Naive thymus-derived CD4-positive, alpha-beta T cell (primary cell): ENCODE measurements at regions of chr21 and their contacts with region 1.

Region 1: GRCh38 chr21:35840197-35840799 is 220.0 kb downstream of the SETD4 start:
- DNase-seq: peak in 7 of 9 donors; percentile 30 to 69 (median 52)
- ATAC-seq: peak; percentile 69
- H3K4me3 ChIP-seq: no peak overlapping the region
- H3K4me3 Mint-ChIP-seq: no peak overlapping the region
- H3K27ac ChIP-seq: no peak overlapping the region
- H3K27ac Mint-ChIP-seq: no peak overlapping the region
- H3K4me1 ChIP-seq: peaks cover 0 to 4% of the 10 kb centered on the region in 2 donors
- H3K4me1 Mint-ChIP-seq: peaks cover 0 to 18% (median 5%) of the 10 kb centered on the region in 7 donors
- H3K27me3 ChIP-seq: no peaks in the 10 kb centered on the region
- H3K27me3 Mint-ChIP-seq: peaks cover 0 to 6% (median 0%) of the 10 kb centered on the region in 5 donors

Region 2: DNA sequence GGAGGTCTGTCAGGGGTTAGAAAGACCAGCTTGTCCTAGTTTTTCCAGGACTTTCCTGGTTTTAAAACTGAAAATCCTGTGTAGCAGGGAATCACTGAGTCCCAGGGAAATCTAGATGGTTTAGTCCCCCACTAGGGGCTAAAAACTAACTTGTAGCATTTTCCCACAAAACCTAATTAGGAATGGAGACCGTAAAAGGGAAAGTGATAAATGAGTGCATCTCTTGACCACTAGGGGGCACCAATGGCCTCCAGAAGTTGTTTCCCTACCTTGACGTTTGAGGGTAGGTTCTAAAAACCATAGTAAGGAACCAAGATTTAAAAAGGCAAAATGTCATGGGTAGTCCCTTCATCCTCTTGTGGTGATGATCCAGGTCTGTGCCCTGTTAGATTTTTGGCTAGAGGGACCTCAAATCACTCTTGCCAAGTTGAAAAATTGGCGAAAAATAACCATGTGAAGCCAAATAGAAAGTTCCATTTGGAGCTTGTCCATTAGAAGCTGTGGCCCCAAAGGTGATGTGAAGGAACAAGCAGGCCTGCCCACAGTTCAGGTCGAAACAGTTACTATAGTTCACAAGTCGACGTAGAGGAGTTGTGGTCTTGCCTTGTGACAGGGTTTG is 1147.0 kb before region 1 on chr21:
- CTCF ChIA-PET with region 1: interaction called, 36 read pairs
- POLR2A ChIA-PET with region 1: no interaction called
- intact Hi-C with region 1: loop called (anchors 1 kb)
- DNase-seq: peak in 7 of 9 donors; percentile 33 to 63 (median 58)
- ATAC-seq: peak; percentile 72
- H3K4me3 ChIP-seq: no peak overlapping the region
- H3K4me3 Mint-ChIP-seq: no peak overlapping the region
- H3K27ac ChIP-seq: no peak overlapping the region
- H3K27ac Mint-ChIP-seq: no peak overlapping the region
- H3K4me1 ChIP-seq: no peaks in the 10 kb centered on the region
- H3K4me1 Mint-ChIP-seq: peaks cover 0 to 10% (median 3%) of the 10 kb centered on the region in 7 donors
- H3K27me3 ChIP-seq: peaks cover 0 to 4% of the 10 kb centered on the region in 2 donors
- H3K27me3 Mint-ChIP-seq: peaks cover 2 to 43% (median 10%) of the 10 kb centered on the region in 5 donors

Region 3: DNA sequence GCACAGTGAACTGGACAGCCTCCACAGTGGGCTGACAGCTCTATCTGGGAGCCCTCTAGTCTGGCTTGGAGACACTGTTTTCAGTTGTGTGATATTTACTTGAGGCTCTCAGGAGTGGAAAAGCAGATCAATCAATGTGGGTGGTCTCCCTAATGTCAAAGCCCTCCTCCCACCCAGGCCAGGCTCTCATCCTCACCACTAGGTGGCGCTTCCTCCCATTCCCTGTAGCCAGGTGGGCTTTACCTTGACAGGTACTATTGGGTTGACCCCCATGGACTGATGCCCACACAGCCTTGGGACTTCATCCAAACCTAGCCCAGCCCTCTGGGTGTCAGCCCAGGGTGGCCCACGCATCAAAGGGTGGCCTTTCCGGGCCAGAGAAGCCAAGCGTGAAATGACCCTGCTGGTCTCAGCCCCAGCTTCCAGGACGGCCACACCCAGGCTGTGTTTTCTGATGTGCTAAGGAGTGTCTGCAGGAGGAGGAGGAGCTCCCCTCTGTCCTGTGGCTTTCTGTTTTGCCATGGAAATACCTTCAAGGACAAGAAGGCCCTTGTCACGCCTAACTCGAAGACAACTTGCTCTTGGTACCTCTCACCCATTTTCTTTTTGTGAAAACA is 1117.5 kb before region 1 on chr21:
- CTCF ChIA-PET with region 1: interaction called, 4 read pairs
- POLR2A ChIA-PET with region 1: no interaction called
- intact Hi-C with region 1: loop called (anchors 1 kb)
- DNase-seq: peak in 4 of 9 donors; percentile 8 to 38 (median 22)
- ATAC-seq: no peak
- H3K4me3 ChIP-seq: no peak overlapping the region
- H3K4me3 Mint-ChIP-seq: no peak overlapping the region
- H3K27ac ChIP-seq: no peak overlapping the region
- H3K27ac Mint-ChIP-seq: no peak overlapping the region
- H3K4me1 ChIP-seq: no peaks in the 10 kb centered on the region
- H3K4me1 Mint-ChIP-seq: peaks cover 0 to 9% (median 0%) of the 10 kb centered on the region in 7 donors
- H3K27me3 ChIP-seq: no peaks in the 10 kb centered on the region
- H3K27me3 Mint-ChIP-seq: peaks cover 4 to 16% (median 10%) of the 10 kb centered on the region in 5 donors

Region 4: GRCh38 chr21:34801519-34802132 is 1038.7 kb before region 1 on chr21:
- CTCF ChIA-PET with region 1: no interaction called
- POLR2A ChIA-PET with region 1: no interaction called
- intact Hi-C with region 1: loop called in 1 of 2 experiments (anchors 1 kb)
- DNase-seq: no peak
- ATAC-seq: peak; percentile 48
- H3K4me3 ChIP-seq: no peak overlapping the region
- H3K4me3 Mint-ChIP-seq: no peak overlapping the region
- H3K27ac ChIP-seq: no peak overlapping the region
- H3K27ac Mint-ChIP-seq: peak overlapping the region in 8 of 9 donors; percentile 22 to 84 (median 68)
- H3K4me1 ChIP-seq: no peaks in the 10 kb centered on the region
- H3K4me1 Mint-ChIP-seq: peaks cover 18 to 44% (median 32%) of the 10 kb centered on the region in 7 donors
- H3K27me3 ChIP-seq: no peaks in the 10 kb centered on the region
- H3K27me3 Mint-ChIP-seq: no peaks in the 10 kb centered on the region

Region 5: GRCh38 chr21:35448876-35449599 is 391.3 kb before region 1 on chr21:
- CTCF ChIA-PET with region 1: no interaction called
- POLR2A ChIA-PET with region 1: no interaction called
- intact Hi-C with region 1: no loop called
- DNase-seq: no peak
- ATAC-seq: no peak
- H3K4me3 ChIP-seq: no peak overlapping the region
- H3K4me3 Mint-ChIP-seq: no peak overlapping the region
- H3K27ac ChIP-seq: no peak overlapping the region
- H3K27ac Mint-ChIP-seq: no peak overlapping the region
- H3K4me1 ChIP-seq: no peaks in the 10 kb centered on the region
- H3K4me1 Mint-ChIP-seq: peaks cover 0 to 4% (median 0%) of the 10 kb centered on the region in 7 donors
- H3K27me3 ChIP-seq: no peaks in the 10 kb centered on the region
- H3K27me3 Mint-ChIP-seq: peaks cover 0 to 12% (median 0%) of the 10 kb centered on the region in 5 donors